ENCODE measurements at regions of chr13 and their contacts with region 1.

Region 1: GRCh38 chr13:48457578-48458242 is 44.8 kb upstream of the LPAR6 start:
- DNase-seq: no peak

Region 2: DNA sequence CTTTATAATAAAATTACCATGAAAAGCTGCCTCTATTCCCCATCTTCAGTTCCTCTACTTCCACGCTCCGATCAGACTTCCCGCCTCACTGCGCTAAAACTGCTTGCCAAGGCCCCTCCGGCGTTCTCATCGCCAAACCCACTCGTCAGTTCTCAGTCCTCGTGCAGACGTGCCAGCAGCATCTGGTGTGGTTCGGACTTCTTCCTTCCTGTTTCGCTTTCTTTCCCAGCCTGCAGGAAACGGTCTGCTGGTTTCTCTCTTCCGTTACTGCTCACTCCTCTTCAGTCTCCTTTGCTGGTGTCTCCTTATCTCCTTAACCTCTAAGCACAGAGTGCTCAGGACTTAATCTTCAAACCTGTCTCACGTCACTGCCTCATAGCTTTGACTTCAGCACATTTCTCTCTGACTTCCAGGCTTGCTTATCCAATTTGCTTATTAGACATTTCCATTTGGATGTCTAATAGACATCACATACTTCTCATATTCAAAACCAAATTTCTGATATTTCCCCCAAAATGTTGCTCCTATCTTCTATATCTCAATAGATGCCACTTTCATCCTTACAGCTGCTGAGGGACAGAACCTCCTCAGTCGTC is 34.9 kb after region 1 on chr13:
- intact Hi-C with region 1: loop called in 1 of 2 experiments (anchors 1 kb)
- DNase-seq: peak; percentile 92

Region 3: GRCh38 chr13:48505597-48506091 is 47.9 kb after region 1 on chr13:
- intact Hi-C with region 1: loop called in 1 of 2 experiments (anchors 2 kb)
- DNase-seq: no peak